Sciatic nerve (tissue), 2 donors: ENCODE measurements at regions of chr7 and their contacts with region 1.

Region 1: GRCh38 chr7:129224251-129225205 is at the start of gene AHCYL2:
- DNase-seq: peak; percentile 98
- ATAC-seq: peak; percentile 99
- total RNA-seq, gene AHCYL2: 46.1 TPM

Region 2: GRCh38 chr7:129210256-129210988 is 14.1 kb before region 1 on chr7:
- intact Hi-C with region 1: no loop called
- DNase-seq: peak; percentile 91
- ATAC-seq: peak; percentile 85

Region 3: GRCh38 chr7:129298268-129298893 is 73.9 kb after region 1 on chr7:
- intact Hi-C with region 1: loop called (anchors 10 kb)
- DNase-seq: peak; percentile 72
- ATAC-seq: no peak

Region 4: GRCh38 chr7:130277763-130278643 is 1053.5 kb after region 1 on chr7:
- intact Hi-C with region 1: no loop called
- DNase-seq: peak; percentile 78
- ATAC-seq: peak; percentile 88